Ascending aorta (tissue), 2 donors: ENCODE measurements at regions of chrX and their contacts with region 1.

Region 1: GRCh38 chrX:84907324-84907968 is 96.2 kb upstream of the APOOL start:
- DNase-seq: no peak
- H3K4me3 ChIP-seq: no peak overlapping the region
- H3K27ac ChIP-seq: no peak overlapping the region
- H3K4me1 ChIP-seq: peaks cover 0 to 2% of the 10 kb centered on the region in 2 donors
- H3K27me3 ChIP-seq: no peaks in the 10 kb centered on the region
- CTCF ChIP-seq: peak in 2 of 3 experiments; percentile 34 to 53

Region 2: DNA sequence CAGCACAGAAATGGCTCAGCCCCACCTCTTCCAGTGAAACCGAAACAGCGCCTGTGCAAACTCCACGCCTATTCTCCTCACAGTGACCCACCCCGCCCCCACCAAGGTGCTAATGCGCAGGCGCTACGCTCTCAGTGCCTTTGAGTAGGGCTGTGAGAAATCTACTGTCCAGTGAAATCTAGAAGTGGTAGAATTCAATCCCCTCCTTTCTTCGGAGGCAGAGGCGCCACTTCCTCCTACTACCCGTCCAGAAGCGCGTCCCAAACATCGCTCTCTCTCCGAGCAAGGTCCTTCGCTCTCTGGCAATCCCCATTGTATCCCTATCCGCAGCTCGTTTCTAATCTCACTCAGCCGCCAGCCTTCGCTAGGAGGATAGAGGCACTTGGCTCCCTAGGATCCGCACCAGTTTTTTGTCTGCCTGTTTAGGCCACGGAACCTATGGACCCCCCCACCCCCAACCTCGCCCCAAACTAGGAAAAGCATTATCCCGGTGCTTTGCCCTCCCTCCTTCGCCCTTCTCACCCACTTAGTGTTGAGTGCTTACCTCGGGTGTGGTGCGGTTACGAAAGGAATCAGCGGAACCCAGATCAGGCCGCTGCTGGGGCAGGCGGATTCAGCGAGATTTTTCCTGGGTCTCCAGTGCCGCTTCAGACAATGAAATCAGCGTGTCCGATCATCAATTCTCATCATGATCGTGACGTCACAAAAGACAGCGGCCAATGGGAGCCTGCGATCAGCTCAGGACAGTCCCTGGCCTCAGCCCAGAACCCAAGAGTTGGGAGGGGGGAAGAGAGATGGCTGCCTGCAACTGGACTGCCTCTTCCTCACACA is 405.4 kb before region 1 on chrX and contains the start of gene HDX:
- intact Hi-C with region 1: loop called (anchors 10 kb)
- DNase-seq: peak; percentile 26 to 93
- H3K4me3 ChIP-seq: peak within 1 kb of the TSS; percentile 48 to 79
- H3K27ac ChIP-seq: peak within 1 kb of the TSS; percentile 82 to 96
- H3K4me1 ChIP-seq: no peaks in the 10 kb centered on the region
- H3K27me3 ChIP-seq: no peaks in the 10 kb centered on the region
- CTCF ChIP-seq: no peak
- total RNA-seq, gene HDX: 5.3 TPM

Region 3: GRCh38 chrX:84729809-84730208 is 177.6 kb before region 1 on chrX:
- intact Hi-C with region 1: loop called (anchors 2 kb)
- DNase-seq: no peak
- H3K4me3 ChIP-seq: no peak overlapping the region
- H3K27ac ChIP-seq: no peak overlapping the region
- H3K4me1 ChIP-seq: no peaks in the 10 kb centered on the region
- H3K27me3 ChIP-seq: no peaks in the 10 kb centered on the region
- CTCF ChIP-seq: peak; percentile 54 to 83 (median 71)